ENCODE measurements at regions of chr11 and their contacts with region 1.

Region 1: DNA sequence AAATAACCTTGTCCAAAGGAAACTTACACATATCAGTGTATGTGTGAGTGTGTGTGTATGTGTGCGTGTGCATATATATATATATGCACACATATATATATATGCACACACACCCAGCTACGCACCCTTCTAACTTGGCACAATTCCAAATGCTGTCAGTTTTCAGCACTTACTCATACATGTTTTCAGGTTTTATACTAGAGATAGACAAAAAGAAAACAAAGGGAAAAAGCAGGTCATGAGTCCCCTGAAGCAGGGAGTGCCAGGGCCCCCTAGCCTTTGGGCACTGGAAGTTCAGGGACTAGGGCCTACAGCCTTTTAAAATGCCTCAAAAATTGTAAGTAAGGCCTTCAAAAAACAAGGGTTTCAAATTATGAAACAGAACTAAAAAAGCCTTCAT is 265.4 kb downstream of the CADM1 start:
- DNase-seq: peak; percentile 39
- H3K4me3 Mint-ChIP-seq: no peak overlapping the region
- H3K27ac Mint-ChIP-seq: no peak overlapping the region
- H3K4me1 Mint-ChIP-seq: no peaks in the 10 kb centered on the region
- H3K27me3 Mint-ChIP-seq: no peaks in the 10 kb centered on the region
- CTCF ChIP-seq: no peak

Region 2: GRCh38 chr11:114738954-114739353 is 499.8 kb before region 1 on chr11:
- CTCF ChIA-PET with region 1: no interaction called
- POLR2A ChIA-PET with region 1: no interaction called
- intact Hi-C with region 1: loop called (anchors 2 kb)
- DNase-seq: peak; percentile 63
- H3K4me3 Mint-ChIP-seq: no peak overlapping the region
- H3K27ac Mint-ChIP-seq: no peak overlapping the region
- H3K4me1 Mint-ChIP-seq: no peaks in the 10 kb centered on the region
- H3K27me3 Mint-ChIP-seq: peaks cover 20% of the 10 kb centered on the region
- CTCF ChIP-seq: peak; percentile 76